OCI-LY7 (cell line): ENCODE measurements at regions of chr17 and their contacts with region 1.

Region 1: GRCh38 chr17:75927286-75927922 is 13.4 kb downstream of the FBF1 start:
- DNase-seq: peak; percentile 74
- H3K4me3 ChIP-seq: no peak overlapping the region
- H3K27ac ChIP-seq: no peak overlapping the region
- H3K4me1 ChIP-seq: no peaks in the 10 kb centered on the region
- CTCF ChIP-seq: peak; percentile 79

Region 2: GRCh38 chr17:75712446-75712845 is 215.0 kb before region 1 on chr17:
- CTCF ChIA-PET with region 1: no interaction called
- POLR2A ChIA-PET with region 1: no interaction called
- intact Hi-C with region 1: no loop called
- DNase-seq: no peak
- H3K4me3 ChIP-seq: no peak overlapping the region
- H3K27ac ChIP-seq: no peak overlapping the region
- H3K4me1 ChIP-seq: no peaks in the 10 kb centered on the region
- CTCF ChIP-seq: no peak

Region 3: GRCh38 chr17:75914643-75915267 is 12.6 kb before region 1 on chr17:
- CTCF ChIA-PET with region 1: interaction called, 17 read pairs
- POLR2A ChIA-PET with region 1: interaction called, 3 read pairs
- intact Hi-C with region 1: no loop called
- DNase-seq: no peak
- H3K4me3 ChIP-seq: no peak overlapping the region
- H3K27ac ChIP-seq: no peak overlapping the region
- H3K4me1 ChIP-seq: peaks cover 24% of the 10 kb centered on the region
- CTCF ChIP-seq: no peak